GM12878 (cell line): ENCODE measurements at regions of chr5 and their contacts with region 1.

Region 1: GRCh38 chr5:169302491-169303118 is 1.7 kb upstream of the SLIT3 start:
- DNase-seq: peak; percentile 2
- ATAC-seq: peak; percentile 90
- H3K4me3 ChIP-seq: no peak overlapping the region
- H3K27ac ChIP-seq: no peak overlapping the region
- H3K4me1 ChIP-seq: no peaks in the 10 kb centered on the region
- H3K27me3 ChIP-seq: peaks cover 0 to 2% of the 10 kb centered on the region in 2 experiments; a peak in 2 of 4 replicates
- CTCF ChIP-seq: peak; percentile 77 to 87 (median 85)
- EP300 ChIP-seq: no peak
- POLR2A ChIP-seq: no peak
- RAD21 ChIP-seq: peak; percentile 65

Region 2: DNA sequence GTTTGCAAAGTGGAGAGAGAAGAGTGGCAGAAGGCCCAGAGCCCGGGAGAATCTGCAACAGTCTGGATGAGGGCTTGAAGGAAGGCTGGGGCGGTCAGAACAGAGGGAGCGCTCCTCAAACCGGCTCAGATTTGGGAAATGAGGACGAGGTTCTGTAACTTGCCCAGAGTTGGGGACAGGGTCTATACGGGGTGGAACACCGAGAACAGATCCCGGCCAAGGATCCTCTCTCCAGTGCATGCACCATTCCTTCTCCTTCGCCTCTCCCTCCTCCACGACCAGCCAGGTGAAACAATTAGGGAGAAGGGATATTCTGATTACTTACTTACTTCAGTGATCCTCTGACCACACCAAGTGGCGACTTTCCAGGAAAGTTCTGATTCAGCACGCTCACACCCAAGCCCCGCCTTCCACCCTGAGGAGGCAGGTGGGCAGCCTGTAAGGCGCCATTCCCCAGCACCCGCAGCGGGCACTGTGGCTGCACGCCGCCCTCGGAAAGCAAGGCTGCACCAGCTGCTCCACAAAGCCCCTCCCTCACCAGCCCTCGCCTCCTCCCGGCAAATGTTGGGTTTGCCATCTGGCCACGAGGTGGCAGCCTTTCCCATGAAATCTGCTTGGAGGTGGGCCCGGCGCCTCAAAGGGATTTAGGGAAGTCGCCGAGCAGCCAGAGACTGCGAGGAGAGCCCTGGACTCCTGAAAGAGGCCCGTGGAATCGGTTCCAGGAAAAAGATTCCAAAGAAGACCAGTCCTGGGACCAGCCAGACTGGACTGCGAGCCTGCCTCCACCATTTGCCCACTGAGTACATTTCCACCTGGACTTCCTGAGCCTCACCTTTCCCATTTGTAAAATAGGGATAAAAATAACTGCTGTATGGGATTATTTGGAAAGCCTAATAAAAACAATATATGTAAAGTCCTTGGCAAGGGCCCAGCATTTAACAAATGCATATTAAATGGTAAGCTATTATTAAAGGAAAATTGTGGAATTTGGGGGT is 1033.4 kb before region 1 on chr5:
- CTCF ChIA-PET with region 1: interaction called, 3 read pairs
- POLR2A ChIA-PET with region 1: no interaction called
- RAD21 ChIA-PET with region 1: no interaction called
- SMC1A ChIA-PET with region 1: no interaction called
- in situ Hi-C with region 1: loop called (anchors 10 kb)
- intact Hi-C with region 1: loop called (anchors 2 kb)
- DNase-seq: no peak
- ATAC-seq: peak; percentile 97
- H3K4me3 ChIP-seq: peak overlapping the region; percentile 56; the same call in 1 of the 2 replicates
- H3K27ac ChIP-seq: no peak overlapping the region
- H3K4me1 ChIP-seq: peaks cover 3% of the 10 kb centered on the region
- H3K27me3 ChIP-seq: no peaks in the 10 kb centered on the region
- CTCF ChIP-seq: peak; percentile 80 to 89 (median 81)
- EP300 ChIP-seq: no peak
- POLR2A ChIP-seq: no peak
- RAD21 ChIP-seq: peak; percentile 98

Region 3: DNA sequence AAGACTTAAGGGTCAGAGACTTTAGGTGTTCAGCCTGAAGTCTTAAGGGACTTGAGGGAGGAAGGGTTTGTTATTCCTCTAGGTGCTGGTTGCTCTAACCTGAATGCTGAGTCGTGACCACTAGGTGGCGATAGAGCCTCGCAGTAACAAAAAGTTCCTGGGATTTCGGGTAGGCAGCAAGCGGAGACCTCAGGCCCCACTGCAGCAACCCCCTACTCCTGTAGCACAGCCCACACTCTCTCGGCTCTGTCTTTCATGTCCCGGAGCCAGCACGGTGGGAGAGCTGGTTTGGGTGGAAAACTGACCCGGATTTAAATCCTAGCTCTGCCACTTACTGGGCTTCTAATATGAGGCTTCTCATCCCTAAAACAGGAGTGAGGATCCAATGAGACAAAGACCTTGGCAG is 623.1 kb before region 1 on chr5:
- CTCF ChIA-PET with region 1: no interaction called
- POLR2A ChIA-PET with region 1: no interaction called
- RAD21 ChIA-PET with region 1: no interaction called
- SMC1A ChIA-PET with region 1: interaction called, 4 read pairs
- in situ Hi-C with region 1: loop called (anchors 10 kb)
- intact Hi-C with region 1: loop called (anchors 5 kb)
- DNase-seq: peak; percentile 16
- ATAC-seq: peak; percentile 88
- H3K4me3 ChIP-seq: no peak overlapping the region
- H3K27ac ChIP-seq: no peak overlapping the region
- H3K4me1 ChIP-seq: no peaks in the 10 kb centered on the region
- H3K27me3 ChIP-seq: no peaks in the 10 kb centered on the region; a peak in 1 of 4 replicates
- CTCF ChIP-seq: peak; percentile 78 to 91 (median 83)
- EP300 ChIP-seq: no peak
- POLR2A ChIP-seq: no peak
- RAD21 ChIP-seq: peak; percentile 86

Region 4: DNA sequence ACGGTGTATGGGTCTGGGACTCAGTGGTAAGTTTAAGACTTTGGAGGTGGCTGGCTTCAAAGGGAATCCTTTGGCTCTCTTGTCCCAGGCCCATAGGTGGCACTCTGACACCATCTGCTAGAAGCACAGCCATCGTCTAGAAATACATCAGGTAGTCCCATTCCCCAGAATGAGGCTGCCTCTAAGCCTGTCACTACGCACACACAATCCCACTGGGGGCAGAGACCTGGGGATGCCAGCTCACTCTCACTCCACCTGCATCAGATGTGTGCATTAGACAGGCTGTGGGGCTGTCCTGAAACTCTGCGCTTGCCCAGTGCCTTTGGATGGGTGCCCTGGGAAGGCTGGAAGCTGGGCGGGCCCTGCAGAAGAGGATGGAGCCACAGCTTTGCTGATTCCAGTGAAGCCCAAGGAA is 595.9 kb before region 1 on chr5:
- CTCF ChIA-PET with region 1: interaction called, 3 read pairs
- POLR2A ChIA-PET with region 1: no interaction called
- RAD21 ChIA-PET with region 1: interaction called, 4 read pairs
- SMC1A ChIA-PET with region 1: no interaction called
- in situ Hi-C with region 1: no loop called
- intact Hi-C with region 1: loop called (anchors 2 kb)
- DNase-seq: no peak
- ATAC-seq: peak; percentile 73
- H3K4me3 ChIP-seq: no peak overlapping the region
- H3K27ac ChIP-seq: no peak overlapping the region
- H3K4me1 ChIP-seq: no peaks in the 10 kb centered on the region
- H3K27me3 ChIP-seq: peaks cover 0 to 4% of the 10 kb centered on the region in 2 experiments; a peak in 1 of 4 replicates
- CTCF ChIP-seq: peak; percentile 42 to 68 (median 62); a peak in 5 of 6 replicates
- EP300 ChIP-seq: no peak
- POLR2A ChIP-seq: no peak
- RAD21 ChIP-seq: peak; percentile 60

Region 5: DNA sequence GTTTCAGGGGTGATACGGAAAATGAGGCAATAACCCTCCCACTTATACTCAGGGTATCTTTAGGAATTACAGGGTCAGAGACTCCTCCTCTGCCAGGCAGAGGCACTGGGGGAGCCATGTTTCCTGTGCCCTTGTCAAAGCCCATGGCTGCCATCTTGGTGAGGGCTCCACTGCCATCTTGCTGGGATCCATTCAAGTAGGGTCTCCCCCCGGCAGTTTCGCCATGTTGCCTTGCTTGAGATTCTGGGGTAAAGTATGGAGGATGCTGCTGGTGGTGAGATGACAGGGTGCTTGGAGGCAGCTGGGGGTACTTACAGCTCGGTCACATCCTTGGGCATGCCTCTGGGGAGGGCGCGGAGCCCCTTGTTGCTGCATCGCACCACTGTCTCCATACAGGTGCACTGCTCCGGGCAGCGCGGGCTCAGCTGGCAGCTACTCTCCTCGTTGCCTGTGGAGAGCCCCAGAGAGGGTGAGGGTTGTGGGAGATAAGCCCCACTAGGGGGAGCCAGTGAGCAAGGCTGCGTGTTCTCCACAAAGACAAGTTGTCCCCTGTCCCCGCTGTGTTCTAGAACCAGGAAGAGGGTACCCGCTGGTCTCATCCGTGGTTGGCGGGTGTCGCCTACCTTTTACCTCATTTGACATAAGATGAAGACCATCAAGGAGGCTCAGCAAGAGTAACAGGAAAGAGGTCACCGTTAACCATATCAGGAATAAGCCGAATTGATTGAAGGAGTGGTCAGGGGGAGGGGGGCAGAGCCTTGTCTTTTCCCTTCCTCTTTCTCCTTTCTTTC is 554.4 kb before region 1 on chr5:
- CTCF ChIA-PET with region 1: no interaction called
- POLR2A ChIA-PET with region 1: no interaction called
- RAD21 ChIA-PET with region 1: no interaction called
- SMC1A ChIA-PET with region 1: no interaction called
- in situ Hi-C with region 1: no loop called
- intact Hi-C with region 1: loop called (anchors 2 kb)
- DNase-seq: no peak
- ATAC-seq: peak; percentile 95
- H3K4me3 ChIP-seq: no peak overlapping the region
- H3K27ac ChIP-seq: no peak overlapping the region
- H3K4me1 ChIP-seq: no peaks in the 10 kb centered on the region
- H3K27me3 ChIP-seq: no peaks in the 10 kb centered on the region; a peak in 1 of 4 replicates
- CTCF ChIP-seq: peak; percentile 60 to 90 (median 80)
- EP300 ChIP-seq: no peak
- POLR2A ChIP-seq: no peak
- RAD21 ChIP-seq: peak; percentile 36

Region 6: DNA sequence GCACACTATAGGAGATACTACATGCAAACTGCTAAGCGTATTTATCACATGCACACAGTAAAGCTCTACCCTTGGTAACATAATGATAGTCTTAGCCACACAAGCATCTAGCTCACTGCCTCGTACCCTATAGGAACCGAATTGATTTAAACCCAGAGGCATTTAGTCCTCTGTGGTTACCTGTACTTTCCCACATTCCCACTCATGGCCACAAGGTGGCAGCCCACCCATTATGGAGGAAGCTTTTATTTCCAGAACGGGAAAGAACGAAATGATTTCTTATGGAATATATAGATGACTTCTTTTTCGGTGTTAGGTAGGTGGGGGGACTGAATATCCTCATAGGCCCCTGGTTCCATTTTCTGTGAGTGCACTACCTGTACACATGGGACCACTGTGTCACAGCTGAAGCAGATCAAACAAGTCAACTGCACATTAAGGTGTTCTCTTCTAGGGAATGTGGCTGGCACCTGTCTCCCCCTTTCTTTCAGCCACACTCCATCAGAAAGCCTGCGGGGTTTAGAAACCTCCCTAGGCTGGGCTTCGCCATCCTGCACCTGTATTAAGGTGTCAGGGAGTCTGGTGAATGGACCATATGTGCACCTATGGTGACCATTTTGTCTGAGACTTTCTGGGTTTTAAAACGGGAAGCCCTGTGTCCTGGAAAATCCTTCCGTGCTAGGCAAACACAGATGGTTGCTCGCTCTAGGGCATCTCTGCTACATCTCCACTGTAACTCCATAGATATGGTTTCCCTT is 314.9 kb before region 1 on chr5:
- CTCF ChIA-PET with region 1: interaction called, 4 read pairs
- POLR2A ChIA-PET with region 1: no interaction called
- RAD21 ChIA-PET with region 1: no interaction called
- SMC1A ChIA-PET with region 1: no interaction called
- in situ Hi-C with region 1: no loop called
- intact Hi-C with region 1: loop called (anchors 1 kb)
- DNase-seq: no peak
- ATAC-seq: peak; percentile 84
- H3K4me3 ChIP-seq: no peak overlapping the region
- H3K27ac ChIP-seq: no peak overlapping the region
- H3K4me1 ChIP-seq: no peaks in the 10 kb centered on the region
- H3K27me3 ChIP-seq: no peaks in the 10 kb centered on the region; a peak in 1 of 4 replicates
- CTCF ChIP-seq: peak; percentile 75 to 92 (median 78)
- EP300 ChIP-seq: no peak
- POLR2A ChIP-seq: no peak
- RAD21 ChIP-seq: peak; percentile 89

Region 7: GRCh38 chr5:169142264-169142970 is 160.2 kb before region 1 on chr5:
- CTCF ChIA-PET with region 1: no interaction called
- POLR2A ChIA-PET with region 1: no interaction called
- RAD21 ChIA-PET with region 1: no interaction called
- SMC1A ChIA-PET with region 1: no interaction called
- in situ Hi-C with region 1: no loop called
- intact Hi-C with region 1: no loop called
- DNase-seq: no peak
- ATAC-seq: no peak
- H3K4me3 ChIP-seq: no peak overlapping the region
- H3K27ac ChIP-seq: no peak overlapping the region
- H3K4me1 ChIP-seq: no peaks in the 10 kb centered on the region
- H3K27me3 ChIP-seq: peaks cover 3 to 4% of the 10 kb centered on the region in 2 experiments; a peak in 3 of 4 replicates
- CTCF ChIP-seq: no peak
- EP300 ChIP-seq: no peak
- POLR2A ChIP-seq: no peak
- RAD21 ChIP-seq: no peak

Region 8: GRCh38 chr5:169331292-169331852 is 28.8 kb after region 1 on chr5:
- CTCF ChIA-PET with region 1: no interaction called
- POLR2A ChIA-PET with region 1: no interaction called
- RAD21 ChIA-PET with region 1: no interaction called
- SMC1A ChIA-PET with region 1: no interaction called
- in situ Hi-C with region 1: no loop called
- intact Hi-C with region 1: no loop called
- DNase-seq: no peak
- ATAC-seq: no peak
- H3K4me3 ChIP-seq: no peak overlapping the region
- H3K27ac ChIP-seq: no peak overlapping the region
- H3K4me1 ChIP-seq: no peaks in the 10 kb centered on the region
- H3K27me3 ChIP-seq: no peaks in the 10 kb centered on the region
- CTCF ChIP-seq: no peak
- EP300 ChIP-seq: no peak
- POLR2A ChIP-seq: no peak
- RAD21 ChIP-seq: no peak

Region 9: DNA sequence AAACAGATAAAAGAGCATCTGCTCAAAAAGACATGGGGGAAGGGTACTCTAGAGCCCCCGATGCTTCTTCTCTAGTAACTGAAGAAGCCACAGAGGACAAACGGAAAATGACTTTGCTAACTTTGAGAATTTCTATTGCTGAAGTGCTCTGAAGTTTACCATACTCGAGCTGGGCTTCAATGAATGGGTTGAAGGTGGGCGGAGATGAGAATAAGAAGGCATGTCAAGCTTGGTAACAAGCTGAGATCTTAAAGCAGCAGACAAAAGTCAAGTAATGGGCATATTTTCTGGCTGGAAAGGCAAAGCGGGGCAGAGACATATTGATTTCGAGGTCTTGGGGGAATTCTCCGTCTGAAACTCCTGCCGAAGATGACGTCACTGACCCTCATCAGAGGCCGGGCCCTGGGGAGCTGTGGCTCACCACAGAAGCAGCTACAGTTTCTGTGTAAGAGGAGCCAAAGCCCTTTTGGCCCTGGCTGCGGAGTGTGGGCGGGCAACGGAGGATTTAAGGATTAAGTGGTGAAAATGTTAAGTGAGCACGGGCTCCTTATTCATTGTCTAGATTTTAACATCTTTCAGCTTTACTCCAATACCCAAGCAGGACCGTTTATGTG is 114.1 kb after region 1 on chr5:
- CTCF ChIA-PET with region 1: no interaction called
- POLR2A ChIA-PET with region 1: no interaction called
- RAD21 ChIA-PET with region 1: no interaction called
- SMC1A ChIA-PET with region 1: no interaction called
- in situ Hi-C with region 1: no loop called
- intact Hi-C with region 1: no loop called
- DNase-seq: peak; percentile 44
- ATAC-seq: peak; percentile 97
- H3K4me3 ChIP-seq: 0 out of 2 replicates have a peak overlapping the region, but pooled peaks have one; percentile 19
- H3K27ac ChIP-seq: no peak overlapping the region
- H3K4me1 ChIP-seq: peaks cover 9% of the 10 kb centered on the region
- H3K27me3 ChIP-seq: 0 out of 4 replicates have a peak, but pooled peaks cover 0 to 5% of the 10 kb centered on the region in 2 experiments
- CTCF ChIP-seq: no peak
- EP300 ChIP-seq: peak; percentile 13 to 69; a peak in 2 of 4 replicates
- POLR2A ChIP-seq: no peak
- RAD21 ChIP-seq: no peak

Region 10: DNA sequence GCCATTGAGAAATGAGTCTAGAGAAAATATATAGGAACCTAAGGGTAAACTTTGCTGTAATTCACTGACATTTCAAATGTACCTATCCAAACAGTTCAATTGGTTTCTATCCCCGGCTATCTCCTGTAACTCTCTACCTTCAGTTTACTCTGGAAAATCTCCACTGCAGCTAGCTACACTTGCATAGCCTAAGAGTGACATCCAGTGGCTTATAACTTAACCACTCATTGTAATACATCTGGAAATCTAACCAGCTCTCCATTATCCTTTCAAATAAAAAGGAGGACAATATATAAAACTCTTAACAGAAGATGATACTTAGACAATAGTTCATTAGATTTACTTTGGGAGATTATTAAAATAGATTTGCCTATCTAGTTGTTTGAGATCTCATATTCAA is 245.7 kb after region 1 on chr5:
- CTCF ChIA-PET with region 1: no interaction called
- POLR2A ChIA-PET with region 1: no interaction called
- RAD21 ChIA-PET with region 1: no interaction called
- SMC1A ChIA-PET with region 1: no interaction called
- in situ Hi-C with region 1: no loop called
- intact Hi-C with region 1: loop called (anchors 5 kb)
- DNase-seq: no peak
- ATAC-seq: peak; percentile 47
- H3K4me3 ChIP-seq: no peak overlapping the region
- H3K27ac ChIP-seq: no peak overlapping the region
- H3K4me1 ChIP-seq: no peaks in the 10 kb centered on the region
- H3K27me3 ChIP-seq: peaks cover 1 to 3% of the 10 kb centered on the region in 2 experiments; a peak in 1 of 4 replicates
- CTCF ChIP-seq: peak in 1 of 3 experiments; percentile 46; a peak in 1 of 6 replicates
- EP300 ChIP-seq: no peak
- POLR2A ChIP-seq: no peak
- RAD21 ChIP-seq: peak; percentile 66